ENCODE measurements at regions of chr19 and their contacts with region 1.

Region 1: GRCh38 chr19:6663236-6664201 is 6.4 kb downstream of the TNFSF14 start:
- DNase-seq: no peak
- H3K4me3 Mint-ChIP-seq: no peak overlapping the region
- H3K27ac Mint-ChIP-seq: no peak overlapping the region
- H3K4me1 Mint-ChIP-seq: peaks cover 12% of the 10 kb centered on the region
- H3K27me3 Mint-ChIP-seq: no peaks in the 10 kb centered on the region

Region 2: GRCh38 chr19:6610934-6611852 is 52.3 kb before region 1 on chr19:
- intact Hi-C with region 1: loop called (anchors 1 kb)
- DNase-seq: no peak
- H3K4me3 Mint-ChIP-seq: no peak overlapping the region
- H3K27ac Mint-ChIP-seq: no peak overlapping the region
- H3K4me1 Mint-ChIP-seq: peaks cover 25% of the 10 kb centered on the region
- H3K27me3 Mint-ChIP-seq: peaks cover 27% of the 10 kb centered on the region

Region 3: DNA sequence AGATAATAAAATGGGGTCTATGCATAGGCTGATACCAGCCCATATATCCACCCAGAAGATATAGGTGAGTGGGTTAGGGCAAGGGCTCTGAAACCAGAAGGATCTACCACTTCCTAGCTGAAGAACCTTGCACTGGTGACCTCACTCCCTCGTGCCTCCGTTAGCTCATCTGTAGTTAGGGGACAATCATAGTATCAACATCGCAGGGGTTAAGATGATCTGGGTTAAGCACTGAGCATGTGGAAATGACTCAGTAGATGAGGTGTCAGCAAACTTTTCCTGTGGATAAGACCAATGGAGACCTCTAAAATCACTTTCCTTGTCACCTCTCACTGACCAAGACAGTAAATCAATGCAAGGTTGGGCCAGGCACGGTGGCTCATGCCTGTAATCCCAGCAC is 24.1 kb before region 1 on chr19:
- intact Hi-C with region 1: loop called (anchors 1 kb)
- DNase-seq: no peak
- H3K4me3 Mint-ChIP-seq: peak overlapping the region; percentile 37
- H3K27ac Mint-ChIP-seq: peak overlapping the region; percentile 45
- H3K4me1 Mint-ChIP-seq: peaks cover 44% of the 10 kb centered on the region
- H3K27me3 Mint-ChIP-seq: peaks cover 3% of the 10 kb centered on the region

Region 4: GRCh38 chr19:6916952-6917351 is 253.4 kb after region 1 on chr19:
- intact Hi-C with region 1: no loop called
- DNase-seq: no peak
- H3K4me3 Mint-ChIP-seq: no peak overlapping the region
- H3K27ac Mint-ChIP-seq: no peak overlapping the region
- H3K4me1 Mint-ChIP-seq: no peaks in the 10 kb centered on the region
- H3K27me3 Mint-ChIP-seq: no peaks in the 10 kb centered on the region